HepG2 (cell line): ENCODE measurements at regions of chr19 and their contacts with region 1.

Region 1: DNA sequence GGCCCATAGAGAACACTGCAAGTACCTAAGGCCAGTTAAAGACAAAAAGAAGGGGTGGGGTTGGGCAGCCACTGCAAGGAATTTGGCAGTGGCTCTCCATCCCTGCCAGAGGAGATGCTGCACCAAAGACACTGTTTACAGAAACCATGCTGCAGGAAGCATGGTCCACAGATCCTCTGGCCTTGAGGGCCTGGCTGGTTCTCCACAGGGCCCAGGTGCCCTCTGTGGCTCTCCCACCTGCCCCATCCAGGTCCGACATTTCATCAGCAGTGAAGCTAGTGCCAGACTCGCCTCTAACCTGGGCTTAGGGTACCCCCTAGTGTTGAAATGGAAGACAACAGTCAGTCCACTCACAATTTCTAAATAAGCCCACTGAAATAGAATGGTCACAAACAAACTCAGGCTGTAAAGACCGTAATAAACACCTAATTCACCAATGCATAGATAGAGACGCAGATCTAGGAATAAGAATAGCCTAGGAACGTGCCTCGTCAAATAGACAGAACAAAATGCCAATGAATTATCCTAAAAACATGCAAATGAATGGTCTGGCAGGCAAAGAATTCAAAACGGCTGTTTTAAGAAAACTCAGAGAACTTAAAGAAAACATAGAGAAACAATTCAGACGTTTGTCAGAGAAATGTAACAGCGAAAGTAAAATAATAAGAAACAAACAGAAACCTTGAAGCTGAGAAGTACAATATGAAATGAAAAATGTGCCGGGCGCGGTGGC is 23.3 kb downstream of the LYPD4 start:
- DNase-seq: peak; percentile 41
- ATAC-seq: peak; percentile 80
- H3K4me3 ChIP-seq: no peak overlapping the region
- H3K27ac ChIP-seq: no peak overlapping the region
- H3K4me1 ChIP-seq: no peaks in the 10 kb centered on the region
- H3K27me3 ChIP-seq: peaks cover 0 to 6% of the 10 kb centered on the region in 2 experiments; a peak in 1 of 5 replicates
- CTCF ChIP-seq: peak; percentile 81
- EP300 ChIP-seq: no peak
- POLR2A ChIP-seq: no peak
- RAD21 ChIP-seq: peak; percentile 68

Region 2: DNA sequence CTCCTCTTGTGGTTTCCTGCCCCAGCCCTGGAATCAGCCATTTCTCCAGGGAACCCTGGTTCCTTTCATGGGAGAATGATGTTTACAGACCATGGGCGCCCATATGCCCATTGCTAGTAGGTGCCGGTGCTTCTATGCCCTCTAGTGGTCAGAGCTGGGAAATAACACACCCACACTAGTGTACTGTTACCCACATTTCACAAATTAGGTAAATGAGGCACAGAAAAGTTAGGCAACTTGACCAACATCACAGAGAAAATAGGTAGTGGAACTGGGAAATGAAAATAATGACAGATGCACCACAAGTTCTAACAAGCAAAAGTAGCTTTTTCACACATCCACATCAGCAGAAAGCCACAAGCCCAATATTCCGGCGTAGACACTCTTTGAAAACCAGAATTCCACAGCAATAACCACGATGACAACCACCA is 26.1 kb before region 1 on chr19:
- CTCF ChIA-PET with region 1: interaction called, 20 read pairs
- POLR2A ChIA-PET with region 1: no interaction called
- in situ Hi-C with region 1: no loop called
- intact Hi-C with region 1: loop called (anchors 1 kb)
- DNase-seq: peak; percentile 29
- ATAC-seq: peak; percentile 85
- H3K4me3 ChIP-seq: no peak overlapping the region
- H3K27ac ChIP-seq: no peak overlapping the region
- H3K4me1 ChIP-seq: peaks cover 10% of the 10 kb centered on the region
- H3K27me3 ChIP-seq: peaks cover 0 to 12% of the 10 kb centered on the region in 2 experiments; a peak in 2 of 5 replicates
- CTCF ChIP-seq: peak; percentile 60
- EP300 ChIP-seq: no peak
- POLR2A ChIP-seq: no peak
- RAD21 ChIP-seq: no peak